GM10248 (cell line): ENCODE measurements at regions of chr9 and their contacts with region 1.

Region 1: GRCh38 chr9:124754289-124754688 is 16.8 kb downstream of the NR6A1 start:
- DNase-seq: no peak
- CTCF ChIP-seq: peak; percentile 40

Region 2: GRCh38 chr9:124675261-124676158 is 78.8 kb before region 1 on chr9:
- CTCF ChIA-PET with region 1: no interaction called
- POLR2A ChIA-PET with region 1: no interaction called
- DNase-seq: no peak
- CTCF ChIP-seq: no peak

Region 3: GRCh38 chr9:124743686-124744348 is 10.5 kb before region 1 on chr9:
- CTCF ChIA-PET with region 1: interaction called, 16 read pairs
- POLR2A ChIA-PET with region 1: interaction called, 8 read pairs
- DNase-seq: no peak
- CTCF ChIP-seq: no peak

Region 4: GRCh38 chr9:124764774-124765438 is 10.6 kb after region 1 on chr9:
- CTCF ChIA-PET with region 1: interaction called, 45 read pairs
- POLR2A ChIA-PET with region 1: no interaction called
- DNase-seq: peak; percentile 52
- CTCF ChIP-seq: peak; percentile 24

Region 5: DNA sequence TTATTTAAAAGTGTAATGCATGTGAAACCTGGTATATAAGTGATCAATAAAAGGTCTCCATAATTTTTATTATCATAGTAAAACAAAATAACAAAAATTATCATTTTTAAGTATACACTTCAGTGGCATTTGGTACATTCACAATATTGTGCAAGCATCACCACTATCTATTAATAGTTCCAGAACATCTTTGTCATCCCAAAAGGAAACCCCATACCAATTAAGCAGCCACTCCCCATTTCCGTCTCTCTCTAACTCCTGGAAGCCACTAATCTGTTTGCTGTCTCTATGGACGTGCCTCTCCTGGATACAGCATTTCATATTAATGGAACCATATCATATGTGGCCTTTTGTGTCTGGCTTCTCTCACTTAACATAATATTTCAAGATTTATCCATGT is 30.2 kb after region 1 on chr9:
- CTCF ChIA-PET with region 1: no interaction called
- POLR2A ChIA-PET with region 1: no interaction called
- DNase-seq: no peak
- CTCF ChIP-seq: no peak